ENCODE measurements at regions of chr10 and their contacts with region 1.

Region 1: GRCh38 chr10:132654702-132655661 is 117.4 kb downstream of the INPP5A start:
- DNase-seq: peak; percentile 30
- H3K4me3 ChIP-seq: no peak overlapping the region
- H3K27ac ChIP-seq: no peak overlapping the region
- H3K4me1 ChIP-seq: no peaks in the 10 kb centered on the region
- H3K27me3 ChIP-seq: no peaks in the 10 kb centered on the region
- CTCF ChIP-seq: peak; percentile 82 to 92

Region 2: GRCh38 chr10:132836832-132837540 is 182.0 kb after region 1 on chr10:
- CTCF ChIA-PET with region 1: no interaction called
- dilution Hi-C with region 1: no loop called
- in situ Hi-C with region 1: no loop called
- intact Hi-C with region 1: loop called (anchors 5 kb)
- DNase-seq: peak; percentile 6
- H3K4me3 ChIP-seq: no peak overlapping the region
- H3K27ac ChIP-seq: no peak overlapping the region
- H3K4me1 ChIP-seq: no peaks in the 10 kb centered on the region
- H3K27me3 ChIP-seq: peaks cover 2% of the 10 kb centered on the region
- CTCF ChIP-seq: peak; percentile 50 to 84

Region 3: GRCh38 chr10:132904181-132904819 is 249.3 kb after region 1 on chr10:
- CTCF ChIA-PET with region 1: no interaction called
- dilution Hi-C with region 1: no loop called
- in situ Hi-C with region 1: no loop called
- intact Hi-C with region 1: loop called (anchors 1 kb)
- DNase-seq: peak; percentile 23
- H3K4me3 ChIP-seq: no peak overlapping the region
- H3K27ac ChIP-seq: no peak overlapping the region
- H3K4me1 ChIP-seq: no peaks in the 10 kb centered on the region
- H3K27me3 ChIP-seq: no peaks in the 10 kb centered on the region
- CTCF ChIP-seq: peak; percentile 43 to 53

Region 4: GRCh38 chr10:133124357-133125211 is 469.6 kb after region 1 on chr10:
- CTCF ChIA-PET with region 1: no interaction called
- dilution Hi-C with region 1: no loop called
- in situ Hi-C with region 1: no loop called
- intact Hi-C with region 1: loop called (anchors 1 kb)
- DNase-seq: no peak
- H3K4me3 ChIP-seq: no peak overlapping the region
- H3K27ac ChIP-seq: no peak overlapping the region
- H3K4me1 ChIP-seq: no peaks in the 10 kb centered on the region
- H3K27me3 ChIP-seq: no peaks in the 10 kb centered on the region
- CTCF ChIP-seq: peak in 1 of 2 donors; percentile 31

Region 5: DNA sequence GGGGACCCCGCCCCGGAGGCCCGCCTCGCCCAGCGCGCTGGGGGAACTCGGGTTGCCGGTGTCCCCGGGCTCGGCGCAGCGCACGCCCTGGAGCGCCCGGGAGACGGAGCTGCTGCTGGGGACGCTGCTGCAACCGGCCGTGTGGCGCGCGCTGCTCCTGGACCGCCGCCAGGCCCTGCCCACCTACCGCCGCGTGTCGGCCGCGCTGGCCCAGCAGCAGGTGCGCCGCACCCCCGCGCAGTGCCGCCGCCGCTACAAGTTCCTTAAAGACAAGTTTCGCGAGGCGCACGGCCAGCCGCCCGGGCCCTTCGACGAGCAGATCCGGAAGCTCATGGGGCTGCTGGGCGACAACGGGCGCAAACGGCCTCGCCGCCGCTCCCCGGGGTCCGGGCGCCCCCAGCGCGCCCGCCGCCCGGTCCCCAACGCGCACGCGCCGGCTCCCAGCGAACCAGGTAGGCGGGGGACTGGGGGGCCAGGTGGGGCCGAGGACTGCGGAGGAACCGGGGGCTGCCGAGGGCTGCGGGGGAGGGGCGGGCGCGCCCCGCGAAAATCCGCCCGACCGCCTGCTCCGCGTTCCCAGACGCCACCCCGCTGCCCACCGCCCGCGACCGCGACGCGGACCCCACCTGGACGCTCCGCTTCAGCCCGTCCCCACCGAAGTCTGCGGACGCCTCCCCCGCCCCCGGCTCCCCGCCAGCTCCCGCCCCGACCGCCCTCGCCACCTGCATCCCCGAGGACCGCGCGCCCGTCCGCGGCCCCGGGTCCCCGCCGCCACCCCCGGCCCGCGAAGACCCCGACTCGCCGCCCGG is 575.6 kb after region 1 on chr10:
- CTCF ChIA-PET with region 1: no interaction called
- dilution Hi-C with region 1: no loop called
- in situ Hi-C with region 1: loop called in 1 of 2 experiments (anchors 25 kb)
- intact Hi-C with region 1: no loop called
- DNase-seq: no peak
- H3K4me3 ChIP-seq: no peak overlapping the region
- H3K27ac ChIP-seq: no peak overlapping the region
- H3K4me1 ChIP-seq: peaks cover 1% of the 10 kb centered on the region
- H3K27me3 ChIP-seq: peaks cover 33% of the 10 kb centered on the region
- CTCF ChIP-seq: no peak

Region 6: DNA sequence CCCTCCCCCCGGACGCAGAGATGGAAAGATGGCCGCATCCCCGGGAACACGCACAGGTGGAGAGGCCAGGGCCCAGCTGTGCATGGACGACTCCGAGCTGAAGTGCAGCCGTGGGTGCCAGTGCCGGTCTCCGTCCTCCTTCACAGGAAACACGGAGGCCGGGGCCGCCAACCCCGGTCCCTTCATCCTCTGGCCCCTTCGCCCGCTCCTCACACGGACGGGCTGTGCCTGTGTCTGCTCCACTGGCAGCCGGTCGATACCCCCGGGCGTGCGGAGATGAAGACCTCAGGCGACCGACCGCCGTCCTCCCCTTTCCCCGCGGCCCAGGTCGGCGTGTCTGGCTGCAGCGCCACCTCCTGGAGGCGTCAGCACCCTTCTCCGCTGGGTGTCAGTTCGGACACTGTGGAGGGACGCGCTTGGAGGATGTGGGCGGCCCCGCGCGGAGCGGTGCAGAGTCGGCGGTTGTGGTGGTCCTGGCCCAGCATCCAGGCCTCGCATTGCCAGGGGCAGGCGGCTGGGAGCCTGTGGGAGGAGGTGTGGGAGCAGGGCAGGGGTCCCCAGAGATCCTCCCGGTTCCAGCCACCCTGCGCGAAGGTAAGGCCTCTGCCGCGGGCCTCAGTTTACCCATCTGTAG is 663.6 kb after region 1 on chr10:
- CTCF ChIA-PET with region 1: no interaction called
- dilution Hi-C with region 1: no loop called
- in situ Hi-C with region 1: no loop called
- intact Hi-C with region 1: loop called (anchors 10 kb)
- DNase-seq: peak; percentile 37
- H3K4me3 ChIP-seq: peak overlapping the region in 2 of 3 experiments; percentile 42 to 45
- H3K27ac ChIP-seq: no peak overlapping the region
- H3K4me1 ChIP-seq: peaks cover 7% of the 10 kb centered on the region
- H3K27me3 ChIP-seq: no peaks in the 10 kb centered on the region
- CTCF ChIP-seq: peak; percentile 58 to 79

Measured in mammary epithelial cell (primary cell).